ENCODE measurements at regions of chr18 and their contacts with region 1.

Region 1: GRCh38 chr18:616380-616995 is 19.7 kb downstream of the CLUL1 start:
- DNase-seq: peak in 1 of 3 donors; percentile 15
- ATAC-seq: peak; percentile 58
- H3K4me3 ChIP-seq: no peak overlapping the region
- H3K4me1 ChIP-seq: no peaks in the 10 kb centered on the region
- CTCF ChIP-seq: peak; percentile 21

Region 2: GRCh38 chr18:286515-287310 is 329.8 kb before region 1 on chr18:
- intact Hi-C with region 1: loop called (anchors 10 kb)
- DNase-seq: no peak
- ATAC-seq: no peak
- H3K4me3 ChIP-seq: no peak overlapping the region
- H3K4me1 ChIP-seq: no peaks in the 10 kb centered on the region
- CTCF ChIP-seq: no peak

Region 3: GRCh38 chr18:293536-293935 is 323.0 kb before region 1 on chr18:
- intact Hi-C with region 1: loop called (anchors 10 kb)
- DNase-seq: no peak
- ATAC-seq: no peak
- H3K4me3 ChIP-seq: no peak overlapping the region
- H3K4me1 ChIP-seq: no peaks in the 10 kb centered on the region
- CTCF ChIP-seq: no peak

Region 4: DNA sequence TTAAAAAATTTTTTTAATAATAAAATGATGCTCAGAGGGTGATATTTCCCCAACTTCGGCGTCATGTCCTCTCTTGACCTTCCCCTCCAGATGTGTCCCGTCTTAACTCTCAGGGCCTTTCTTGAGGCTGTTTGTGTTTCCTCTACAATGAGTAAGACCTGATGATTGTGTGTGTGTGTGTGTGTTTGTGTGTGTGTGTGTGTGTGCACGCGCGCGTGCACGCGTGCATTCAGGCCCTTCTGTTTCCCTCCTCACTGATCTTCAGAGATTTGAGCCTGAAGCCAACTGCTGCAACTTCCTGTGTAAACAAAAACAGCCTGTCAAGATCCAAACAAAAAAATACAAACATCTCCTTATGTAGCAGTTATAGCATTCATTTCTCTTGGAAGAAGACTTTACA is 60.4 kb before region 1 on chr18:
- intact Hi-C with region 1: no loop called
- DNase-seq: no peak
- ATAC-seq: no peak
- H3K4me3 ChIP-seq: no peak overlapping the region
- H3K4me1 ChIP-seq: no peaks in the 10 kb centered on the region
- CTCF ChIP-seq: no peak

Measured in mucosa of descending colon (tissue), 3 donors.